Heart left ventricle (tissue), 16 donors: ENCODE measurements at regions of chr19 and their contacts with region 1.

Region 1: DNA sequence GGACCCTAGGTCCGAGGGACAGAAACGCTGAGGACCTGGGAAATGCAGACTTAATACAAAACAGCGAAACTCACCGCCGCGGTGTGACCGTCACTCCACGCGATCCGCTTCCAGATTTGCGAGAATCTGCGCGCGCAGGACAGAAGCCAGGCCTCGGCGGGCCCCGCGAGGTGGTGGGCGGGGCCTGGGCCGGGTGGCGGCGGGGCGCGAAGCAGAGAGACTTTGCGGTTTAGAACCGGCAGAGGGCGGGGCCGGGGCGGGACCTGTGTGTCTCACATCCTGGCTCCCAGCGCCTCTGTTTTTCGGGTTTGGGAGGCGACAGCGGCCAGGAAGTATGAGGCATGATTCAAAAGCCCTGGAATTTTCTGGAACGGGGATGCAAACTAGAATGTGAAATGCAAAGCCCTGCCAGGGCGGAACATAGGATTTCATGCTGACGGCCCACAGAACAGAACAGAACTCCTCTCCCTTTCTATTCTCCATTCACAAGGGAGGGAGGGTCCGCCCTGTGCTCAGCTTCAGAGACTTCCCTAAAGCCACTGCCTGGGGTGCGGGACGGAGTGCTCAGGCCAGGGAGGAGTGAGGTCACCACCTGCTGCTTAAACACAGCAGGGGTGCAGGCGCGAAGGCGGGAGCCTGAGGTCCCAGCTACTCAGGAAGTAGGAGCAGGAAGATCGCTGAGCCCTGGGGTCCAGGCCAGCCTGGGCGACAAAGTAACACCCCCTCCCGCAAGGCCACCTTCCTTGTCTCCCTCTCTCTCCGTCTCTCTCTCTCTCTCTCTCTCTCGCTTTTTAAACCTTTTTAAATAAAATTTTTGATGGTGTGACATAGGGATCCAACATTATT is 44.3 kb downstream of the ZNF611 start:
- DNase-seq: peak; percentile 95 to 98 (median 97)
- ATAC-seq: peak; percentile 97 to 100 (median 100)
- H3K4me3 ChIP-seq: peak overlapping the region; percentile 52 to 92 (median 70)
- H3K27ac ChIP-seq: peak overlapping the region; percentile 82 to 97 (median 90)
- H3K4me1 ChIP-seq: peaks cover 0 to 27% (median 12%) of the 10 kb centered on the region in 12 donors
- H3K27me3 ChIP-seq: no peaks in the 10 kb centered on the region
- CTCF ChIP-seq: peak in 11 of 12 donors; percentile 17 to 62 (median 34)
- POLR2A ChIP-seq: peak in 1 of 2 donors; percentile 88

Region 2: DNA sequence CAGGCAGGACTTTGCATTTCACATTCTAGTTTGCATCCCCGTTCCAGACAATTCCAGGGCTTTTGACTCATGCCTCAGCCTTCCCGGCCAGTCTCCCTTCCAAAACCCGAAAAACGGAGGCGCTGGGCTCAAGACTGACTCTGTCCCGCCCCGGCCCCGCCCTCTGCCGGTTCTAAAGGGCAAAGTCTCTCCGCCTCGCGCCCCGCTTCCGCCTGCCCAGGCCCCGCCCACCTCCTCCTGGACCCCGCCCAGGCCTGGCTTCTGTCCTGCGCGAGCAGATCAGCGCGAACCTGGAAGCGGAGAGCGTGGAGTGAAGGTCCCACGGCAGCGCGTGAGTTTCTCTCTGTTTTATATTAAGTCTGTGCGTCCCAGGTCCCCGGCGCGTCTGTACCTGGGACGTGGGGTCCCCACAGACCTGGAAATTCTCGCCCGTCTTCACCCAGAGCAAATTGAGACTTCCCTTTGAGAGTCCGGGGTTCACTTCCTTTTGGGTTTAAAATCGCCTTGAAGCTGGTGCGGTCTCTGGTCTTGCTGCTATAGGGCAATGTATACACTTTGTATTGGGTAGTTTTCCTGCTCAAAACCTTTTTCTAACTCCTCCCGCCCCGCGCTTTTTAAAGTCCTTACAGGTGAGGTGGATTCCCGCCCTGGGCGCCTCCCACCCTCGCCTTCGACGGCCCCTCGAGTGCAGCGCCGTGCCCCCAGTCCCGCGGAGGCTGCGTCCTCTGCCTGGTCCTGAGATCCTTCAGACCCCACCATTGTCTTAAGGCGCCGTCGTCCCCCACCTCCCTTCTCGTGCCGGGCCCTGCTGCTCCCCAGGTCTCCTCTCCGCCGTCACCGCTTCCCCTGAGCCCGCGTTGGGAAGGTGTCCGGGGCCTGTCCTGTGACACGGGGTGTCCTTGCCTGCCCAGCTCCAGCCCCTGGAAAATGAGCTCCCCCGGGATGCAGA is 89.3 kb before region 1 on chr19:
- intact Hi-C with region 1: loop called in 2 of 10 experiments (anchors 5 kb)
- DNase-seq: peak; percentile 94 to 97 (median 95)
- ATAC-seq: peak; percentile 95 to 99 (median 99)
- H3K4me3 ChIP-seq: peak overlapping the region; percentile 43 to 80 (median 68)
- H3K27ac ChIP-seq: peak overlapping the region in 11 of 12 donors; percentile 32 to 74 (median 66)
- H3K4me1 ChIP-seq: peaks cover 0 to 19% (median 12%) of the 10 kb centered on the region in 12 donors
- H3K27me3 ChIP-seq: no peaks in the 10 kb centered on the region
- CTCF ChIP-seq: peak in 11 of 12 donors; percentile 24 to 65 (median 46)
- POLR2A ChIP-seq: peak in 1 of 2 donors; percentile 25

Region 3: DNA sequence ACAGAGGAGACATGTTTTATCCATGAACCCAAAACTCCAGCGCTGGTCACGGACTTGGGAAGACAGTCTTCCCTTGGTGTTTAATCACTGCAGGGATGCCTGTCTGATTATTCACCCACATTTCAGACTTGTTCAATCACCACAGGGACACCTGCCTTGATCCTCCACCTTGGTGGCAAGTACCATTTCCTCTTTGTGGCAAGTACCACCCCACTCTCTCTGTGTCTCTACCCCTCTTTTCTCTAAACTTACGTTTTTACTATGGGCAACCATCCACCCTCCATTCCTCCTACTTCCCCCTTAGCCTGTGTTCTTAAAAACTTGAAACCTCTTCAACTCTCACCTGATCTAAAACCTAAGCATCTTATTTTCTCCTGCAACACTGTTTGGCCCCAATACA is 69.2 kb before region 1 on chr19:
- intact Hi-C with region 1: no loop called
- DNase-seq: no peak
- ATAC-seq: no peak
- H3K4me3 ChIP-seq: no peak overlapping the region
- H3K27ac ChIP-seq: no peak overlapping the region
- H3K4me1 ChIP-seq: no peaks in the 10 kb centered on the region
- H3K27me3 ChIP-seq: no peaks in the 10 kb centered on the region
- CTCF ChIP-seq: no peak
- POLR2A ChIP-seq: no peak

Region 4: GRCh38 chr19:52637718-52638585 is 52.6 kb before region 1 on chr19 and contains the start of gene ZNF83:
- intact Hi-C with region 1: loop called in 2 of 10 experiments (anchors 2 to 5 kb)
- DNase-seq: peak; percentile 96 to 99 (median 97)
- ATAC-seq: peak; percentile 99
- H3K4me3 ChIP-seq: peak within 1 kb of the TSS; percentile 50 to 97 (median 74)
- H3K27ac ChIP-seq: peak within 1 kb of the TSS; percentile 55 to 92 (median 86)
- H3K4me1 ChIP-seq: peaks cover 0 to 22% (median 11%) of the 10 kb centered on the region in 12 donors
- H3K27me3 ChIP-seq: no peaks in the 10 kb centered on the region
- CTCF ChIP-seq: no peak
- POLR2A ChIP-seq: peak in 1 of 2 donors; percentile 60
- total RNA-seq, gene ZNF83: 9.5 to 23.4 (median 18.4) TPM

Region 5: DNA sequence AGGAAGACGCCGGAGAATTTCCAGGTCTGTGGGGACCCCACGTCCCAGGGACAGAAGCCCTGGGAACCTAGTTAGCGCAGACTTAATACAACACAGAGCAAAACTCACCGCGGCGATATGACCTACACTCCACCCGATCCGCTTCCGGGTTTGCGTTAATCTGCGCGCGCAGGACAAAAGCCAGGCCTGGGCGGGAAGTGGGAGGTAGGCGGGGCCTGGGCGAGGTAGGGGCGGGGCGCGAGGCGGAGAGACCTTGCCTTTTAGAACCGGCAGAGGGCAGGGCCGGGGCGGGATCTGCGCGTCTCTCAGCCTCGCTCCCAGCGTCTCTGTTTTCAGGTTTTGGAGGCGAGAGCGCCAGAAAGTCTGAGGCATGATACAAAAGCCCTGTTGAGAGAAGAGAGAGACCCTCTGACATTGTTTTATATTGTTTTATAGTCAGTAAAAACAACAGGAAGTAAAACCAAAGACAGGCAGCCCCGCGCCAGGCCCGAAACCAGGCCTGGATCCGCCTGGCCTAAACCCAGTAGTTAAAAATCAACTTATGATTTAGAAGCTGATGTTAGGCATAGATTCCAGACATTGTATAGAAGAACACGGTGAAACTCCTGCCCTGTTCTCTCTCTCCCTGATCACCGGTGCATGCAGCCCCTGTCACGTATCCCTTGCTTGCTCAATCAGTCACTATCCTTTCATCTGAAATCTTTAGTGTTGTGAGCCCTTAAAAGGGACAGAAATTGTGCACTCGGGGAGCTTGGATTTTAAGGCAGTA is 44.5 kb after region 1 on chr19 and contains the start of gene ZNF611:
- intact Hi-C with region 1: loop called in 4 of 10 experiments (anchors 1 to 10 kb)
- DNase-seq: peak; percentile 98 to 99 (median 98)
- ATAC-seq: peak; percentile 98 to 99 (median 99)
- H3K4me3 ChIP-seq: peak within 1 kb of the TSS; percentile 61 to 95 (median 82)
- H3K27ac ChIP-seq: peak within 1 kb of the TSS; percentile 73 to 96 (median 90)
- H3K4me1 ChIP-seq: peaks cover 0 to 30% (median 11%) of the 10 kb centered on the region in 12 donors
- H3K27me3 ChIP-seq: no peaks in the 10 kb centered on the region
- CTCF ChIP-seq: peak; percentile 43 to 85 (median 66)
- POLR2A ChIP-seq: peak; percentile 33 to 91
- total RNA-seq, gene ZNF611: 3.8 to 12.6 (median 6.9) TPM

Region 6: DNA sequence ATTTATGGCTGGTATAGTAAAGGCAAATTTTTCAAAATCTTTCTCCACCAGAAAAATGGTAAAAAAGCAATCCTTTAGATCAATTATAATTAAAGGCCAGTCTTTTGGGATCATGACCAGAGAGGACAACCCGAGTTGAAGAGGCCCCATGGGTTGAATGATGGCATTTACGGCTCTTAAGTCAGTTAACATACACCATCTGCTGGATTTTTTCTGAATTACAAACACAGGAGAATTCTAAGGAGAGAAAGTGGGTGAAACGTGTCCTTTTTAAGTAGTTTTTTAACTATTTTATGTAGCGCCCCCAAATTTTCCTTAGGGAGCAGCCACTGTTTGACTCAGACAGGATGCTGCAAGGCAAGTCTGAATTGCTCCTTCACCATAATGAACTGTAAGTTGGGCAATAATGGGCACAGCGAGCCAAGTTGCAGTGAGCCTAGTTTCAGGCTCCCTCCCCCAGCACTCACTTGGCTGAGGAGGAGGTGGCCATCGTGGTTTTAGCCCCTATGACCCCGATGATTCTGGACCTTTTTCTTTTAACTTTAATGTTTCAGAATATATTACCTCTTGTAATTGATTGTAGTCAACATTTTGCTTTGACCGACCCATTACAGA is 57.9 kb after region 1 on chr19:
- intact Hi-C with region 1: loop called in 1 of 10 experiments (anchors 10 kb)
- DNase-seq: no peak
- ATAC-seq: peak in 2 of 4 donors; percentile 46 to 56
- H3K4me3 ChIP-seq: peak overlapping the region in 1 of 12 donors; percentile 19
- H3K27ac ChIP-seq: no peak overlapping the region
- H3K4me1 ChIP-seq: peaks cover 0 to 4% (median 0%) of the 10 kb centered on the region in 12 donors
- H3K27me3 ChIP-seq: no peaks in the 10 kb centered on the region
- CTCF ChIP-seq: peak; percentile 23 to 67 (median 46)
- POLR2A ChIP-seq: no peak

Region 7: GRCh38 chr19:52761696-52762095 is 71.1 kb after region 1 on chr19:
- intact Hi-C with region 1: no loop called
- DNase-seq: no peak
- ATAC-seq: no peak
- H3K4me3 ChIP-seq: no peak overlapping the region
- H3K27ac ChIP-seq: no peak overlapping the region
- H3K4me1 ChIP-seq: no peaks in the 10 kb centered on the region
- H3K27me3 ChIP-seq: no peaks in the 10 kb centered on the region
- CTCF ChIP-seq: no peak
- POLR2A ChIP-seq: no peak

Region 8: DNA sequence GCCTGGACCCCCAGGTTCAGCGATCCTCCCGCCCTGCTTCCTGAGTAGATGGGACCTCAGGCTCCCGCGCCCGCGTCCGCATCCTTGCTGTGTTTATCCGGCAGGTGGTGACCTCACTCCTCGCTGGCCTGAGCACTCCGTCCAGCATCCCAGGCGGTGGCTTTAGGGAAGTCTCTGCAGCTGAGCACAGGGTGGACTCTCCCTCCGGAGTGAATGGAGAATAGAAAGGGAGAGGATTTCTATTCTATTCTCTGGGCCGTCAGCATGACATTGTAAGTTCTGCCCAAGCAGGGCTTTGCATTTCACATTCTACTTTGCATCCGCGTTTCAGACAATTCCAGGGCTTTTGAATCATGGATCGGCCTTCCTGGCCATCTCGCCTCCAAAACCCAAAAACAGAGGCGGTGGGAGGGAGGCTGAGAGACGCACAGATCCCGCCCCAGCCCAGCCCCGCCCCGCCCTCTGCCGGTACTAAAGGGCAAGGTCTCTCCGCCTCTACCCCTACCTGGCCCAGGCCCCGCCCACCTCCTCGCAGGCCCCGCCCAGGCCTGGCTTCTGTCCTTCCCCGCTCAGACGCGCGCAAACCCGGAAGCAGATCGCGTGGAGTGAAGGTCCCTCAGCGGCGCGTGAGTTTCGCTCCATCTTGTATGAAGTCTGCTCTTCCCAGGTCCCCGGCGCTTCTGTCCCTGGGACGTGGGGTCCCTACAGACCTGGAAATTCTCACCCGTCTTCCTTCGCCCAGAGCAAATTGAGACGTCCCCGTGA is 674.7 kb after region 1 on chr19 and contains the start of gene ZNF525:
- intact Hi-C with region 1: loop called in 2 of 10 experiments (anchors 5 kb)
- DNase-seq: peak; percentile 83 to 95 (median 86)
- ATAC-seq: peak; percentile 95 to 100 (median 100)
- H3K4me3 ChIP-seq: peak within 1 kb of the TSS; percentile 55 to 81 (median 69)
- H3K27ac ChIP-seq: peak within 1 kb of the TSS in 9 of 12 donors; percentile 46 to 70 (median 57)
- H3K4me1 ChIP-seq: peaks cover 0 to 13% (median 5%) of the 10 kb centered on the region in 12 donors
- H3K27me3 ChIP-seq: no peaks in the 10 kb centered on the region
- CTCF ChIP-seq: peak in 5 of 12 donors; percentile 4 to 23 (median 14)
- POLR2A ChIP-seq: peak in 1 of 2 donors; percentile 33
- total RNA-seq, gene ZNF525: 1.6 to 6.0 (median 3.6) TPM